ENCODE measurements at regions of chr10 and their contacts with region 1.

Region 1: DNA sequence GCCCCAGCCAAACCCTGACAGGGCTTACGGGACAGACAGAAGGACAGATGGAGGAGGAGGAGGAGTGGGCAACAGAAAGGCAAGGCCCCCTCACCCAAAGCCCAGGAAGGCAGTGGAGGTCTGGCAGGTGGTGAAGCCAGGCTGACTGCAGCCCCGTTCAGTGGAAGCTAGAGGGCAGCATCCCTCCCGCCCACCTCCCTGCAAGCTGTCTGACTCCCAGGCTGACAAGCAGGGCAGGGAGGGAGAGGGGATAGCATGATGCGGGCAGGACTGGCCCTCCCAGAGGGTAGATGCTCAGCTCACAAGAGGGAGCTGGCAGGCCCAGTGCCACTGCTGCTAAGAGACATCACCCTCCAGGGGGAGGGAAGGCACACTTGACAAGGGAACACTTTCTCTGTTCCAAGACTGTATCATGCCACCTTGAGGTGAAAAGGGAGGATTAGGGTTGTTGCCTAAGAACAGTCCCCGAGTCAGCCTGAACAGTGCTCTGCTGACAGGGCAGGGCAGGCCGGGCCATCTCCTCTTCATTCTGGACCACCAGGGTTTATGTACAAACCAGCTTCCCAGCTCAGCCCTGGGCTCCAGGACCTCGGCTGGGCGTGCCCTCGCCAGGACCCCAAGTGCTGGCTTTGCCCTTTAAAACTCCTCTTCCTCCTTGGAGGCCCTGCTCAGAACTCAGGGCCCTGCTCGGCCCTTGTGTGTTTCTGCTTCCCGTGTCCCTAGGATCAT is 61.8 kb downstream of the RASGEF1A start:
- DNase-seq: peak; percentile 68
- ATAC-seq: peak; percentile 51
- H3K4me3 ChIP-seq: no peak overlapping the region
- H3K27ac ChIP-seq: peak overlapping the region; percentile 70
- H3K4me1 ChIP-seq: peaks cover 21 to 37% of the 10 kb centered on the region in 2 experiments; a peak in 3 of 4 replicates
- H3K27me3 ChIP-seq: no peaks in the 10 kb centered on the region
- CTCF ChIP-seq: peak; percentile 84 to 97 (median 94)
- POLR2A ChIP-seq: no peak
- RAD21 ChIP-seq: peak; percentile 73

Region 2: GRCh38 chr10:42917821-42918220 is 287.3 kb before region 1 on chr10:
- CTCF ChIA-PET with region 1: no interaction called
- POLR2A ChIA-PET with region 1: no interaction called
- RAD21 ChIA-PET with region 1: no interaction called
- intact Hi-C with region 1: no loop called
- DNase-seq: no peak
- ATAC-seq: no peak
- H3K4me3 ChIP-seq: no peak overlapping the region
- H3K27ac ChIP-seq: no peak overlapping the region
- H3K4me1 ChIP-seq: no peaks in the 10 kb centered on the region
- H3K27me3 ChIP-seq: no peaks in the 10 kb centered on the region
- CTCF ChIP-seq: no peak
- POLR2A ChIP-seq: no peak
- RAD21 ChIP-seq: no peak

Region 3: GRCh38 chr10:43145311-43145710 is 59.8 kb before region 1 on chr10:
- CTCF ChIA-PET with region 1: no interaction called
- POLR2A ChIA-PET with region 1: no interaction called
- RAD21 ChIA-PET with region 1: no interaction called
- intact Hi-C with region 1: loop called (anchors 10 kb)
- DNase-seq: no peak
- ATAC-seq: no peak
- H3K4me3 ChIP-seq: no peak overlapping the region
- H3K27ac ChIP-seq: no peak overlapping the region
- H3K4me1 ChIP-seq: no peaks in the 10 kb centered on the region
- H3K27me3 ChIP-seq: no peaks in the 10 kb centered on the region
- CTCF ChIP-seq: no peak
- POLR2A ChIP-seq: no peak
- RAD21 ChIP-seq: no peak

Region 4: GRCh38 chr10:43193496-43194080 is 11.5 kb before region 1 on chr10:
- CTCF ChIA-PET with region 1: interaction called, 40 read pairs
- POLR2A ChIA-PET with region 1: interaction called, 5 read pairs
- RAD21 ChIA-PET with region 1: no interaction called
- intact Hi-C with region 1: no loop called
- DNase-seq: no peak
- ATAC-seq: peak; percentile 16; the same call in 1 of the 2 replicates
- H3K4me3 ChIP-seq: no peak overlapping the region
- H3K27ac ChIP-seq: no peak overlapping the region
- H3K4me1 ChIP-seq: no peaks in the 10 kb centered on the region
- H3K27me3 ChIP-seq: no peaks in the 10 kb centered on the region
- CTCF ChIP-seq: no peak
- POLR2A ChIP-seq: no peak
- RAD21 ChIP-seq: no peak

Region 5: GRCh38 chr10:43304687-43305340 is 99.7 kb after region 1 on chr10:
- CTCF ChIA-PET with region 1: interaction called, 13 read pairs
- POLR2A ChIA-PET with region 1: no interaction called
- RAD21 ChIA-PET with region 1: no interaction called
- intact Hi-C with region 1: no loop called
- DNase-seq: no peak
- ATAC-seq: peak; percentile 73
- H3K4me3 ChIP-seq: peak overlapping the region; percentile 51 to 58
- H3K27ac ChIP-seq: 0 out of 2 replicates have a peak overlapping the region, but pooled peaks have one; percentile 2
- H3K4me1 ChIP-seq: peaks cover 8 to 24% of the 10 kb centered on the region in 2 experiments
- H3K27me3 ChIP-seq: peaks cover 9% of the 10 kb centered on the region; the same call in 1 of the 2 replicates
- CTCF ChIP-seq: no peak
- POLR2A ChIP-seq: no peak
- RAD21 ChIP-seq: 0 out of 2 replicates have a peak, but pooled peaks have one; percentile 7

Region 6: DNA sequence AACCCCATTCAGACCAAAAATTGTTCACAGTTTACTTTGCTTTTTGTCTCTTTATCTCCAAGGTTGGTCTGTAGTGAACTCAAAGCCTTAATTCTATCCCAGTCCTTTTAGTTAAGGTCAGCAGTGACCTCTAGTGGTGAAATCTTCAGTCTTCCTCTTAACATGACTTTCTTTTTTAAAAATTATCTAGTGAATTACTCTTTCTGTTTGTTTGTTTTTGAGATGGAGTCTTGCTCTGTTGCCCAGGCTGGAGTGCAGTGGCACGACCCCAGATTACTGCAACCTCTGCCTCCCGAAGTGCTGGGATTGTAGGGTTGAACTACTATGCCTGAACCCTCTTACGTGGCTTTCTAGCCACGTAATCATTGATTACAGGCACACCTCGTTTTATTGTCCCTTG is 256.8 kb after region 1 on chr10:
- CTCF ChIA-PET with region 1: no interaction called
- POLR2A ChIA-PET with region 1: interaction called, 3 read pairs
- RAD21 ChIA-PET with region 1: no interaction called
- intact Hi-C with region 1: loop called (anchors 2 kb)
- DNase-seq: peak; percentile 80
- ATAC-seq: peak; percentile 85
- H3K4me3 ChIP-seq: no peak overlapping the region
- H3K27ac ChIP-seq: no peak overlapping the region
- H3K4me1 ChIP-seq: no peaks in the 10 kb centered on the region; a peak in 1 of 4 replicates
- H3K27me3 ChIP-seq: no peaks in the 10 kb centered on the region
- CTCF ChIP-seq: peak; percentile 62 to 78 (median 76)
- POLR2A ChIP-seq: no peak
- RAD21 ChIP-seq: peak; percentile 84

Region 7: GRCh38 chr10:43793704-43794103 is 588.6 kb after region 1 on chr10:
- CTCF ChIA-PET with region 1: no interaction called
- POLR2A ChIA-PET with region 1: no interaction called
- RAD21 ChIA-PET with region 1: no interaction called
- intact Hi-C with region 1: no loop called
- DNase-seq: no peak
- ATAC-seq: no peak
- H3K4me3 ChIP-seq: no peak overlapping the region
- H3K27ac ChIP-seq: no peak overlapping the region
- H3K4me1 ChIP-seq: no peaks in the 10 kb centered on the region
- H3K27me3 ChIP-seq: peaks cover 49% of the 10 kb centered on the region
- CTCF ChIP-seq: no peak
- POLR2A ChIP-seq: no peak
- RAD21 ChIP-seq: no peak